ENCODE measurements at regions of chr12 and their contacts with region 1.

Region 1: DNA sequence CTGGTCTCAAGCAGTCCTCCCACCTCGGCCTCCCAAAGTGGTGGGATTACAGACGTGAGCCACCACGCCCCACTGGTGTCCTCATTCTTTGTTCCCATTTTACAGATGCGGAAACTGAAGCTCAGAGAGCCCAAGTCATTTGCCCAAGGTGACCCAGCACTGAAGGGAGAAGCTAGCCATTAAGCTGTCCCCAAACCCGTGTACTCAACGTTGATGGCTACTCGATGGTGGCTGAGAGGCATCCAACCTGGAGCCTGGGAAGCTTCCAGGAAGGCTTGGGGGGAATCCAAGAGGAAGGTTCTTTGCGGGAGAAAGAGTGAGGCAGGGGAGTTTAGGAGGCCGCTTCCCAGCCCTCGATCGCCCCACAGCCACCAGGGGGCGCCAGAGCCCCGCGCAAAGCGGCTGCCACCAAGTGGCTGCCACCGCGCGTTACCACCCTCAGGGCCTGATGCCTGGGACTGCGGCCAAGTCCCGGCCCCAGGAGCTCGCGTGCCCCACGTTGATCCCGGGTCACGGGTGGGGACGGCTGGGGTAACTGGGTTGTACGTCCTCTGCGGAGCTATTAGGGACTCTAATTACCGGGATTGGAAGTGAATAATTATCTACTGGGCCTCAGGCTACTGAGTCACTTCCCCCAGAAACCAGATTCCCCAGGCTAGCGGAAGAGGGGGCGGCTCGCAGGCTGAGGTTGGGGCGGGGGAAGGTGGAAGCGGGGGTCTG is 8.8 kb upstream of the SH2B3 start:
- DNase-seq: peak; percentile 80 to 88 (median 83)
- H3K4me3 ChIP-seq: no peak overlapping the region
- H3K4me3 Mint-ChIP-seq: peak overlapping the region in 7 of 8 donors; percentile 17 to 64 (median 49)
- H3K27ac ChIP-seq: no peak overlapping the region
- H3K27ac Mint-ChIP-seq: peak overlapping the region in 6 of 7 donors; percentile 52 to 78 (median 69)
- H3K4me1 ChIP-seq: no peaks in the 10 kb centered on the region
- H3K4me1 Mint-ChIP-seq: peaks cover 5 to 21% (median 10%) of the 10 kb centered on the region in 4 donors
- H3K27me3 ChIP-seq: no peaks in the 10 kb centered on the region
- H3K27me3 Mint-ChIP-seq: no peaks in the 10 kb centered on the region

Region 2: DNA sequence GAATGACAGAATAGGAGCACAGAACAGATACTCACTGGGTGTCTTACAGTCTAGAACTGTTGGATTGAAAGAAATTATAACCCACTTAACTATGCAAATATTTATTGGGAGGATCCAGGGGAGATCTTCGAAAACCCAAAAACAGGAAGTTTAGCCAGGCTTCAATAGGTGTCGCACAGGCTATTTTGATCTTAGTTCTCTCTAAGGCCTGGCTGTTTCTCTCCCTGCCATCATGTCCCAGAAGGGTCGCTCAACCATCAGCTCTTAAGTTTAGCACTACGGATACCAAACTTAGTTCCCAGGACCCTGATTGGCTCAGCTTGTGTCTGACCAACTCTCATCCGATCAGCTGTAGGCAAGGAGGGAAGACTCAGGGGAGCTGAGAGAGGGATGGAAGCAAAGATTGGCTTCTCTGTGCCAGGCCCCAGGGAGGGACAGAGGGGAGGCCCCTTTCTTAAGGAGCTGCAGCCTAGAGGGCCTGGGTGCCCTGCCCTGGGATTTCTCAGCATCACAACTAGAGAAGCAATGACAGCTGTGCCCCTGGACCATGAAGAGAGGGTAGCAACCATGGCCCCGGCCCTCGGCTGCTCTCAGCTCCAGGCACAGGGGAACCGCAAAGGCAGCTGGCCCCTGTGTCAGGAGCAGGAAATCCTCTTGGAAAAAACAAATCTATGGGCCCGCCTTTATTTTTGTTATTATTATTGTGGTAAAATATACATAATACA is 41.5 kb before region 1 on chr12:
- CTCF ChIA-PET with region 1: no interaction called
- POLR2A ChIA-PET with region 1: no interaction called
- intact Hi-C with region 1: no loop called
- DNase-seq: no peak
- H3K4me3 ChIP-seq: no peak overlapping the region
- H3K4me3 Mint-ChIP-seq: no peak overlapping the region
- H3K27ac ChIP-seq: no peak overlapping the region
- H3K27ac Mint-ChIP-seq: no peak overlapping the region
- H3K4me1 ChIP-seq: no peaks in the 10 kb centered on the region
- H3K4me1 Mint-ChIP-seq: peaks cover 0 to 7% (median under 1%) of the 10 kb centered on the region in 4 donors
- H3K27me3 ChIP-seq: no peaks in the 10 kb centered on the region
- H3K27me3 Mint-ChIP-seq: peaks cover 4% of the 10 kb centered on the region in 2 donors

Region 3: DNA sequence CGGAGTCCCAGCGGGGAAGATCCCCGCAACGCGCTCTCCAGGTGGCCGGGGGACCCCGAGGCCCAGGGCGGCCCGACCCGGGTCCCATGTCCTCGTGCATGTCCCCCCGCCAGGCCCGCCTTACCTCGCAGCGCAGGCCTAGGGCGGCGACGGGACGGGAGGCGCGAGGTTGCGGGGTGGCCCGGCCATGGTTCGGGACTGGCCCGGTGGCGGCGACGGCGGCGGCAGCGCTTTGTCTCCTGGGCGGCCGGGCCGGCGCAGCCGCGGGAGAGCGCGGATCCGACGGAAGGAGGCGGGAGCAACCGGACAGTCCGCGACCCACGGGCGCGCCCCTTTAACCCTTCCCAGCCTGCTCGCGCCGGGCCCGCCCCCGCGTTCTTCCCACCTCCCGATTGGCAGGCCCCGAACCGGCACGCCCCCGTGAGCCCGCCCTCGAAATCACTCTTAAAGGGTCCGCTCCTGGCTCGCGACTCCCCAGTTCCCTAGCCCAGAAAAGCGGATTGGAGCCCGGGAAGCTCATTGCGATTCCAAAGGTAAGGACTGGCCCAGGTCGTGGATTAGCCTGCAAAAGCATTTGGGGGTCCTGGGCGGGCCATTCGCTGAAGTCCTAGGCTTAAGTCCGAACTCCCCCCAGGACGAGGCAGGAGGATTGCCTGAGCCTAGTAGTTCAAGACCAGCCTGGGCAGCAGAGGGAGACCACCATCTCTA is 27.9 kb before region 1 on chr12 and contains the start of gene PHETA1:
- CTCF ChIA-PET with region 1: interaction called, 11 read pairs
- POLR2A ChIA-PET with region 1: interaction called, 4 read pairs
- intact Hi-C with region 1: no loop called
- DNase-seq: peak; percentile 51 to 66 (median 54)
- H3K4me3 ChIP-seq: peak within 1 kb of the TSS; percentile 47 to 54
- H3K4me3 Mint-ChIP-seq: peak within 1 kb of the TSS; percentile 83 to 89 (median 88)
- H3K27ac ChIP-seq: peak within 1 kb of the TSS; percentile 31
- H3K27ac Mint-ChIP-seq: peak within 1 kb of the TSS in 5 of 7 donors; percentile 65 to 84 (median 73)
- H3K4me1 ChIP-seq: peaks cover 23% of the 10 kb centered on the region
- H3K4me1 Mint-ChIP-seq: peaks cover 14 to 30% (median 19%) of the 10 kb centered on the region in 4 donors
- H3K27me3 ChIP-seq: no peaks in the 10 kb centered on the region
- H3K27me3 Mint-ChIP-seq: peaks cover 0 to 3% of the 10 kb centered on the region in 2 donors
- total RNA-seq, gene PHETA1: 4.7 to 6.4 TPM

Region 4: DNA sequence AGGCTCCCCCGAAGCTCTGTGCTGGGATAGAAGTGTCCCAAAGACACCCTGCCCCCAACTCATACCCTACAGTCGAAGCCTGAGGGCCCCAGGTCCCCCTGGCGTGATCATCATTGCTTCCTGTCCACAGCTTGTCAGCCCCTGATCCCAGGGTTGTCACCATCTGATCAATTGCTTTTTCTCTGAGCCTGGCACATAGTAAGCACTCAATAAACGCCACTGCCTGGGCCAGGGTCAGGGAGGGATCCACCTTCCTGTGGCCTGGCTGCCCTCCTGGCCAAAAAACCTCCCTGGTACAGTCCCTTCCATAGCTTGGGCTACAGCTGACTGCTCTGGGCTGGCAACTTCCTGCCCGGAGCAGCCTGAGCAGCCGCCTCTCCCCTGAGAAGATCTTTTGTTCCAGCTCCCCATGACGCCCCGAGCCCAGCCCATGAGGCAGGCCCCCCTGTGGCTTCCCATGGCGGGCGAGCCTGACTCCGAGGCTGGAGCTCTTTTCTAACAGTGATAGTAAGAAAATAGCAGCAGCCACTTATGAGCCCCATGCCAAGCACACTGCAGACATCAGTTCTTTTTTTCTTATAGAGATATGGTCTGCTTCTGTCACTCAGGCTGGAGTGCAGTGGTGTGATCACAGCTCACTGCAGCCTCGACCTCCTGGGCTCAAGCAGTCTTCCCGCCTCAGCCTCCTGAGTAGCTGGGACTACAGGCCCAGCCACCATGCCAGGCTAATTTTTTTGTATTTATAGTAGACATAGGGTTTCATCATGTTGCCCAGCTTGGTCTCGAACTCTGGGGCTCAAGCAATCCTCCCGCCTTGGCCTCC is 15.3 kb after region 1 on chr12:
- CTCF ChIA-PET with region 1: interaction called, 42 read pairs
- POLR2A ChIA-PET with region 1: interaction called, 4 read pairs
- intact Hi-C with region 1: no loop called
- DNase-seq: no peak
- H3K4me3 ChIP-seq: no peak overlapping the region
- H3K4me3 Mint-ChIP-seq: peak overlapping the region; percentile 18 to 87 (median 79)
- H3K27ac ChIP-seq: peak overlapping the region; percentile 97
- H3K27ac Mint-ChIP-seq: peak overlapping the region; percentile 90 to 98 (median 93)
- H3K4me1 ChIP-seq: peaks cover 81% of the 10 kb centered on the region
- H3K4me1 Mint-ChIP-seq: peaks cover 49 to 95% (median 78%) of the 10 kb centered on the region in 4 donors
- H3K27me3 ChIP-seq: no peaks in the 10 kb centered on the region
- H3K27me3 Mint-ChIP-seq: no peaks in the 10 kb centered on the region

Region 5: DNA sequence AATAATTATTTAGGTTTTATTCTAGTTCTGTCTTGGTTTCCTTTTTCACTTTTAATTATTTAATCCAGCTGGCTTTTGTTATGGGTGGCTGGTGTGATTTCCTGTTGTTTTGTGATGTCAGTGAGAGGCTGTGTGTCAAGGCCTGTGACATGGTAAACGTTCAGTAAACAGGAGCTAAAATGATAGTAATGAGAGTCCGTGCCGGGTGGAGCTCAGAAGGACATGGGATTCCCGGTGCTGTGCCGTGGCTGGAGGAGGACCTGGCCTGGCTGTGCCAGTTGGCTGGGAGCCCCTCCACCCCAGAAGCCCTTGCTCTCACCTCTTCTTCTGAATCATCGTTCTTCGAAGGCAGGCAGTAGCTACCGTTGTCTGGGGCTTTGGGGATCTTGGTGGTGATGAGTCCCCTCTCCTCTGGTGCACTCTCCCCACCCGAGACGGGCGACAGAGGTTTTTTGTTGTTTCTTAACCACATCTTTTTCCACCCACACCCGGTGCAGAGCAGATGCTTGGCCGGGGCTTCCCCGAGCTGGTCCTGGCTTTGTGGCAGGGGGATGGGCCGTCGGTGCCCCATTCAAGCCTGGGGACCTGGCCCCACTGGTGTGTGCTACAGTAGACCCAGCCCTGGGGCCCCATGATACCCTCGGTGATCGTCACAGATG is 37.9 kb after region 1 on chr12:
- CTCF ChIA-PET with region 1: interaction called, 71 read pairs
- POLR2A ChIA-PET with region 1: interaction called, 683 read pairs
- intact Hi-C with region 1: no loop called
- DNase-seq: peak; percentile 90 to 97 (median 92)
- H3K4me3 ChIP-seq: peak overlapping the region in 1 of 2 donors; percentile 38
- H3K4me3 Mint-ChIP-seq: peak overlapping the region; percentile 86 to 91 (median 88)
- H3K27ac ChIP-seq: peak overlapping the region; percentile 98
- H3K27ac Mint-ChIP-seq: peak overlapping the region; percentile 98 to 100 (median 99)
- H3K4me1 ChIP-seq: peaks cover 95% of the 10 kb centered on the region
- H3K4me1 Mint-ChIP-seq: peaks cover 66 to 96% (median 82%) of the 10 kb centered on the region in 4 donors
- H3K27me3 ChIP-seq: no peaks in the 10 kb centered on the region
- H3K27me3 Mint-ChIP-seq: no peaks in the 10 kb centered on the region

Region 6: GRCh38 chr12:111467857-111468241 is 71.0 kb after region 1 on chr12:
- CTCF ChIA-PET with region 1: interaction called, 17 read pairs
- POLR2A ChIA-PET with region 1: no interaction called
- intact Hi-C with region 1: no loop called
- DNase-seq: no peak
- H3K4me3 ChIP-seq: no peak overlapping the region
- H3K4me3 Mint-ChIP-seq: no peak overlapping the region
- H3K27ac ChIP-seq: no peak overlapping the region
- H3K27ac Mint-ChIP-seq: peak overlapping the region in 2 of 7 donors; percentile 2 to 29
- H3K4me1 ChIP-seq: no peaks in the 10 kb centered on the region
- H3K4me1 Mint-ChIP-seq: peaks cover 0 to 8% (median 2%) of the 10 kb centered on the region in 4 donors
- H3K27me3 ChIP-seq: no peaks in the 10 kb centered on the region
- H3K27me3 Mint-ChIP-seq: no peaks in the 10 kb centered on the region

Region 7: GRCh38 chr12:111529424-111530368 is 132.8 kb after region 1 on chr12:
- CTCF ChIA-PET with region 1: interaction called, 152 read pairs
- POLR2A ChIA-PET with region 1: interaction called, 7 read pairs
- intact Hi-C with region 1: loop called (anchors 1 kb)
- DNase-seq: peak; percentile 59 to 67 (median 61)
- H3K4me3 ChIP-seq: no peak overlapping the region
- H3K4me3 Mint-ChIP-seq: no peak overlapping the region
- H3K27ac ChIP-seq: no peak overlapping the region
- H3K27ac Mint-ChIP-seq: peak overlapping the region in 1 of 7 donors; percentile 19
- H3K4me1 ChIP-seq: no peaks in the 10 kb centered on the region
- H3K4me1 Mint-ChIP-seq: peaks cover 0 to 3% (median 1%) of the 10 kb centered on the region in 4 donors
- H3K27me3 ChIP-seq: no peaks in the 10 kb centered on the region
- H3K27me3 Mint-ChIP-seq: no peaks in the 10 kb centered on the region

Region 8: GRCh38 chr12:111812881-111813741 is 416.2 kb after region 1 on chr12:
- CTCF ChIA-PET with region 1: interaction called, 11 read pairs
- POLR2A ChIA-PET with region 1: no interaction called
- intact Hi-C with region 1: loop called (anchors 2 kb)
- DNase-seq: peak; percentile 57 to 65 (median 62)
- H3K4me3 ChIP-seq: no peak overlapping the region
- H3K4me3 Mint-ChIP-seq: peak overlapping the region in 4 of 8 donors; percentile 15 to 39 (median 24)
- H3K27ac ChIP-seq: no peak overlapping the region
- H3K27ac Mint-ChIP-seq: peak overlapping the region in 1 of 7 donors; percentile 1
- H3K4me1 ChIP-seq: peaks cover 10% of the 10 kb centered on the region
- H3K4me1 Mint-ChIP-seq: peaks cover 6 to 10% (median 8%) of the 10 kb centered on the region in 4 donors
- H3K27me3 ChIP-seq: no peaks in the 10 kb centered on the region
- H3K27me3 Mint-ChIP-seq: peaks cover 0 to 7% of the 10 kb centered on the region in 2 donors

Measured in CD4-positive, alpha-beta memory T cell (primary cell).